BJ (cell line): ENCODE measurements at regions of chr12 and their contacts with region 1.

Region 1: DNA sequence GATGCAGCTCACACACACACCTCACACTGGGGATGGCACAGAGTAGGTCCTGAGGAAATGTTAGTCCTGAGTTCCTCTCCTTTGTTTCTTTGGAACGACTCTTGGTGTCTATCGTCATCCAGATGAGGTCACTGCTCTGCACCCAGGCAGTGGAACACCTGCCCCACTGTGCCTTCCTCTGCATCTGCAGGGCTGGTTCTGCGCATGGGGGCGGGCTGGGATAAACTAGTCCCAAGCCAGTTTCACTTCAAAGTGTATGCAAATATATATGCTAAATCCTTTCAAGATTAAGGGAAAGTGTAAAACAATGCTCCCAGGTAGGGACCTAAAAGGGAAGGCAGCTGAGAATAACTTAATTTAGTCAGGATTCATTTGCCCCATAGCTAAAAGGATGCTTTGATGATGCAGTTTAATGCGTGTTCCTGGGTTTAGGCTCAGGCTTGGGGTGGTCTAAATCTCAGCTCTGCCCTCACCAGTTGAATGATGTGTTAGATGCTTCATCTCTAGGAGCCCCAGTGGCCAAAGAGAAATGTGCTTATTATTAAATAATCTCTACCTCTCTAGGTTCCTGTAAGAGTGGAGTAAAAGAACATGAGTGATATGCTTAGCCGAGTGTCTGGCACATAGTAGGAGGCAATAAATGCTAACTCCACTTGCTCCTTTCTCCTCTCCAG is 47.1 kb upstream of the OVCH1 start:
- DNase-seq: no peak
- H3K4me3 ChIP-seq: no peak overlapping the region
- H3K27me3 ChIP-seq: no peaks in the 10 kb centered on the region
- CTCF ChIP-seq: no peak

Region 2: GRCh38 chr12:29317556-29318363 is 226.8 kb before region 1 on chr12:
- CTCF ChIA-PET with region 1: no interaction called
- POLR2A ChIA-PET with region 1: no interaction called
- DNase-seq: no peak
- H3K4me3 ChIP-seq: no peak overlapping the region
- H3K27me3 ChIP-seq: no peaks in the 10 kb centered on the region
- CTCF ChIP-seq: peak; percentile 45

Region 3: DNA sequence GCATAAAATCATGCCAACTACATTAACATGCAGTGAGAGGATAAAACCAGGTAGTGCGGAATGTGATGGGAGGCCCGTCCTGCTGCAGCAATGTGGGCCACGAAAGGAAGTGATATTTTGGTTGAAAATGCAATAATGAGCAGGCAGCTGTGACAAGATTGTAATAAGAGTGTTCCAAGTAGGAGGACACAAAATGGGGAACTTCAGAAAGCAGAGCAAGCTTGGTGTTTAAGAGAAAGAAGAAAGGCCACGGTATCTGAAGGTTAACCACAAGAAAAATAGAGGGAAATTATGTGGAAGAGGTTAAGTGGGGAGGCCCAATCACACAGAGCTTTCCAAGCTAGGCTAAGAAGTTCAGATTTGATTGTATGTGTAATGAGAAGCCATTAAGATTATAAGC is 81.4 kb before region 1 on chr12:
- CTCF ChIA-PET with region 1: no interaction called
- POLR2A ChIA-PET with region 1: no interaction called
- DNase-seq: no peak
- H3K4me3 ChIP-seq: no peak overlapping the region
- H3K27me3 ChIP-seq: no peaks in the 10 kb centered on the region
- CTCF ChIP-seq: no peak

Region 4: DNA sequence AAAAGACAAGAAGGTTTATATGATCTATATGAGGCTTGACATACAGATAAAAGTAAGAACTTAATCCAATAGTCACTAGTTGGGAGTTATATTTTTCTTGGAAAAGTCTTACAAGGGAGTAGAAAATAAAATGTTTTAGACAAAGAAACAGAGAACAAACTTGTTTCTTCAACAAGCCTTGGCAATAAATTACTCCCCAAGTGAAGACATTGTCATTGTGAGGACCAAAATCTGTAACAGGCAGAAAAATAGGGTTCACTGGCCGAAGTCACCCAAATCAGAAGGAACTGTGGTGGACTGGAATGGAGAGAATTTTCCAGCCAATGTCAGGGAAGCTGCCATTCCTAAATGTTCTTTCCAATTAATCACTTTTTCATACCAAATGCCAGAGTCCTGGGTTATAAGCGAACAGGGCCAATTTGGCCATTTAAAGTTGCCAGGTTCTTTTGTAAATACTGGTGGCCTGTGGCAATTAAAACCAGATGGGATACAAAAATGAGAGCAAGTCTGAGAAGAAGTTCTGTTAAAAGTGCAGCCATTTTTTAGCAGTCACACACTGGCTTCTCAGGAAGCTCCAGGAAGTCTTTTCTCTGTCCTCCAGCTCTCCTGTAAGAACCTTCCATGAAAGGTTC is 70.2 kb after region 1 on chr12:
- CTCF ChIA-PET with region 1: no interaction called
- POLR2A ChIA-PET with region 1: interaction called, 15 read pairs
- DNase-seq: peak; percentile 63
- H3K4me3 ChIP-seq: no peak overlapping the region
- H3K27me3 ChIP-seq: no peaks in the 10 kb centered on the region
- CTCF ChIP-seq: no peak

Region 5: GRCh38 chr12:29762637-29763300 is 218.2 kb after region 1 on chr12:
- CTCF ChIA-PET with region 1: no interaction called
- POLR2A ChIA-PET with region 1: no interaction called
- DNase-seq: no peak
- H3K4me3 ChIP-seq: no peak overlapping the region
- H3K27me3 ChIP-seq: no peaks in the 10 kb centered on the region
- CTCF ChIP-seq: no peak